IMR-90 (cell line): ENCODE measurements at regions of chr9 and their contacts with region 1.

Region 1: GRCh38 chr9:15422372-15423230 is at the start of gene SNAPC3:
- DNase-seq: peak; percentile 93
- ATAC-seq: peak; percentile 98
- H3K4me3 ChIP-seq: peak within 1 kb of the TSS; percentile 80
- H3K27ac ChIP-seq: peak within 1 kb of the TSS; percentile 93
- H3K4me1 ChIP-seq: peaks cover 3% of the 10 kb centered on the region
- H3K27me3 ChIP-seq: no peaks in the 10 kb centered on the region
- CTCF ChIP-seq: 0 out of 2 replicates have a peak, but pooled peaks have one; percentile 1
- POLR2A ChIP-seq: no peak; the same call in 1 of the 2 replicates
- RAD21 ChIP-seq: no peak
- total RNA-seq, gene SNAPC3: 31.0 and 40.0 TPM in 2 replicates

Region 2: GRCh38 chr9:14710804-14711203 is 711.8 kb before region 1 on chr9:
- CTCF ChIA-PET with region 1: no interaction called
- POLR2A ChIA-PET with region 1: no interaction called
- dilution Hi-C with region 1: no loop called
- in situ Hi-C with region 1: no loop called
- intact Hi-C with region 1: no loop called
- DNase-seq: peak; percentile 26
- ATAC-seq: no peak
- H3K4me3 ChIP-seq: no peak overlapping the region
- H3K27ac ChIP-seq: no peak overlapping the region
- H3K4me1 ChIP-seq: no peaks in the 10 kb centered on the region
- H3K27me3 ChIP-seq: no peaks in the 10 kb centered on the region
- CTCF ChIP-seq: no peak
- POLR2A ChIP-seq: no peak
- RAD21 ChIP-seq: no peak

Region 3: GRCh38 chr9:15211160-15211814 is 211.3 kb before region 1 on chr9:
- CTCF ChIA-PET with region 1: interaction called, 3 read pairs
- POLR2A ChIA-PET with region 1: no interaction called
- dilution Hi-C with region 1: no loop called
- in situ Hi-C with region 1: loop called (anchors 10 kb)
- intact Hi-C with region 1: loop called (anchors 1 kb)
- DNase-seq: peak; percentile 79
- ATAC-seq: peak; percentile 78
- H3K4me3 ChIP-seq: no peak overlapping the region
- H3K27ac ChIP-seq: no peak overlapping the region; the same call in 1 of the 2 replicates
- H3K4me1 ChIP-seq: peaks cover 2% of the 10 kb centered on the region
- H3K27me3 ChIP-seq: no peaks in the 10 kb centered on the region
- CTCF ChIP-seq: peak; percentile 87
- POLR2A ChIP-seq: no peak; the same call in 1 of the 2 replicates
- RAD21 ChIP-seq: peak; percentile 88

Region 4: GRCh38 chr9:15370466-15371447 is 51.8 kb before region 1 on chr9:
- CTCF ChIA-PET with region 1: no interaction called
- POLR2A ChIA-PET with region 1: no interaction called
- dilution Hi-C with region 1: no loop called
- in situ Hi-C with region 1: no loop called
- intact Hi-C with region 1: loop called (anchors 2 kb)
- DNase-seq: no peak
- ATAC-seq: no peak
- H3K4me3 ChIP-seq: no peak overlapping the region
- H3K27ac ChIP-seq: peak overlapping the region; percentile 7; the same call in 1 of the 2 replicates
- H3K4me1 ChIP-seq: peaks cover 13% of the 10 kb centered on the region
- H3K27me3 ChIP-seq: no peaks in the 10 kb centered on the region
- CTCF ChIP-seq: no peak
- POLR2A ChIP-seq: no peak
- RAD21 ChIP-seq: no peak

Region 5: GRCh38 chr9:15433661-15434060 is 11.1 kb after region 1 on chr9:
- CTCF ChIA-PET with region 1: no interaction called
- POLR2A ChIA-PET with region 1: interaction called, 10 read pairs
- dilution Hi-C with region 1: no loop called
- in situ Hi-C with region 1: no loop called
- intact Hi-C with region 1: no loop called
- DNase-seq: no peak
- ATAC-seq: no peak
- H3K4me3 ChIP-seq: no peak overlapping the region
- H3K27ac ChIP-seq: no peak overlapping the region
- H3K4me1 ChIP-seq: peaks cover 4% of the 10 kb centered on the region; the same call in 1 of the 2 replicates
- H3K27me3 ChIP-seq: no peaks in the 10 kb centered on the region
- CTCF ChIP-seq: no peak
- POLR2A ChIP-seq: no peak
- RAD21 ChIP-seq: no peak